Dendritic cell treated with granulocyte-macrophage colony-stimulating factor and Interleukin-4, amounts not matched to agents 40 ng/mL and 50 ng/mL, for 4 days (primary cell): ENCODE measurements at regions of chr4 and their contacts with region 1.

Region 1: DNA sequence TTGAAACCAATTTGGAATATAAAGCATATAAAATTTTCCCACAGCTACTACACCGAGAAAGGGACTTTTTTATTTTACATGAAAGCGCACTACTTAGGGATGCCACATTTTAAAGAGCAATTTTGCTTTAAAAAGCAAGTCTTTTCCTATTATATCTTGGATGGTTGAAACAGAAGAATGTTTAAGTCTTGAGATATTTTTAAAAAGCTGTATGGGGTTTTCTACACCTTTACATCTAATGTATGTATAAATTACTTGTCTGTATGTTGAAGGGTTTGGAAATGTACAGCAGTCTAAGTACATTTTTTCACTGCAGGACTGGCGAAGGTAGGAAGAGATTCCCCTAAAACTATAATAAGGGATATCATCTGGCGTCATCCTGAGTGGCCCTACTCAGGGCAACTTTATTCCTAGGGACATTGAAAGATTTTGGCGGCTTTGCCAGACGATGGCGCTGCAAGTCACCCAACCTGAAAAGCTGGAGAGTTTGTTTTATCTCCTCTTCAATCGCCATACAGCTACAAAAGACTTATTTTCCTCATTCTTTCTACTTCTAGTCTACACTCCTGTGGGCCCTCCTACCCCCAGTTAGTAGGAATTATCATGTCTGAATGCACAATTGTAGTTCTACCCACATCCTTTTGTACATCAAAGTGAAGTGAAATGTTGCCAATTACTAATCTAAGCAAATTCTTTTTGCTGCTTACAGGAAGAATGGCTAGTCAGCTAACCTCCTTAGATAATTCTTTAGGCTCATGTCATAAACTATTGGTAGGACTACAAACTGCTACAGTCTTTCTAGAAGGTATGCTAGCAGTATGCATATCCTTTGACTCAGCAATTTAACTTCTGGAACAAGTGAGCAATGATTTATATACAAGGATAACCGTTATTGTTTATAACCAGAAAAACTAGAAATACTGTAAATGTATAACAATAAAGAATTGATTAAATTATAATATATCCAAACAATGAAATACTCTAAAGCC is 782 bp upstream of the NEK1 start:
- H3K4me3 Mint-ChIP-seq: peak overlapping the region; percentile 90
- H3K27ac Mint-ChIP-seq: peak overlapping the region; percentile 97
- H3K4me1 Mint-ChIP-seq: peaks cover 11% of the 10 kb centered on the region
- H3K27me3 Mint-ChIP-seq: no peaks in the 10 kb centered on the region

Region 2: DNA sequence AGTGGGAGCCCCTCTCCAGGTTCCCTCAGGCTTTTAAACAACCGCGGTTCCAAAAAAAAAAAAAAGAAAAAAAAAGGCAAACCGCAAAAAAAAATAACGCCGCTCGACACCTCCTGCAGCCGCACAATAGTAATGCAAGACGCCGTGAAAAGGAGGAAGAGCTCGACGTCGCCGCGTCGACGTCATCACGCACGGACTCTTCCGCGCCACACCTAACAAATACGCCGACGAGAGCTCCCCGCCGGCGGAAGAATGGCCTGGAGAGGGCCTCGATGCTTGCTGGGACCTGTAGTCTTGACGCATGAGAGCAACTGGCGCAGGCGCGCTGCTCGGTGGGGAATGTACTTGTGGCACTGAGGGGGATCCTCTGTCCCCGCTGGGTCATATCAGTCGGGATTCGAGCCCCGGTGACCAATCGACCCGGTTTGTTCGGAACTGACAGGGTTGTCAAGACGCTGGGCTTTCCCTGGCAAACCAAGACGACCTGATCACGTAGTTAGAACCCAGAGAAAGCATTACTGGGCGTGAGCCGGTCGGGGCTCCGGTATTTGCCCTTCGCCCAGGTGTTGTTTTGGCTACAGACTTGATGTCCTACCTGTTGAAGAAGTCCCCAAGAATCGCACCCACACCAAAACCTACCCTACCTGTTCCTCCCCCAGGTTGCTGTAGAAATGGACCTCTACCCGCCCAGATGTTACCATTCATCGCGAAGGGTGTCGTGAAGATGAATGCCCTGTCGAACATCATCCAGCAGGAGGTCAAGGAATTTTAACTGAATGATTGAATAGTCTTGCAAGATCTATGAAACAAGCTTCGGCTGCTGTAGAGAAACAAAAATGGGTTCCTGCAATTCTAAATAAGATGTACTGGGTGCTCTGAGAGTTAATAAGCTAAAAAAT is 602.8 kb before region 1 on chr4 and contains the start of gene CBR4:
- intact Hi-C with region 1: loop called (anchors 5 kb)
- H3K4me3 Mint-ChIP-seq: peak within 1 kb of the TSS; percentile 90
- H3K27ac Mint-ChIP-seq: peak within 1 kb of the TSS; percentile 96
- H3K4me1 Mint-ChIP-seq: peaks cover 19% of the 10 kb centered on the region
- H3K27me3 Mint-ChIP-seq: no peaks in the 10 kb centered on the region

Region 3: DNA sequence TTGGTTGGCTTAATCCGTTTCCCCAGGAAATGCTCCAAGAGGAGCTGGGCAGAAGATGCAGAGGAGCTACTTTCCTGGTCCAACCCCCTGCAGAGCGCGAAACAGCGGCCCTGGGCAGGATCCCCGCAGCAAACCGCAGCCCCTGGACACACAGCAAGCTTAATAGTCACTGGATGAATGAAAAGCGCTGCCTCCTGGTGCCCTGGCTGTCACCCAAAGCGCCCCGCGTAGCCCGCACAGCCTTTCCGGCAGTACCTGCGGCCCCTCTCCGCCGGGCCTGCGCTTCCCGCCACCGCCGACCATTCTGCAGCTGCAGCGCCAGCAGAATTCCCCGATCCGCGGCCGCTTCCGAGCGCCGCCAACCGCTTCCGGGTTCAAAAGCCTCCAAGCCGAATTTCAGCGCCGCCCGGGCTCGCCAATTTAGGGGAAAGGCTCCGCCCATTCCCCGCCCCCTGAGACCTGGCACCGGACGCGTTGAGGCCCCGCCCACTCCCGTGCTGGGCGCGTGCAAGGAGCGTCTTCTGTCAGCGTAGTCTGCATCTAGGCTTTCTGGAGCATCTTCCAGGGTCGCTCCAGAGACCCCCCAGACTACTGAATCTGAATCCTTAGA is 144.5 kb after region 1 on chr4 and contains the start of gene HPF1:
- intact Hi-C with region 1: loop called (anchors 2 kb)
- H3K4me3 Mint-ChIP-seq: peak within 1 kb of the TSS; percentile 90
- H3K27ac Mint-ChIP-seq: peak within 1 kb of the TSS; percentile 79
- H3K4me1 Mint-ChIP-seq: peaks cover 30% of the 10 kb centered on the region
- H3K27me3 Mint-ChIP-seq: peaks cover 8% of the 10 kb centered on the region

Region 4: DNA sequence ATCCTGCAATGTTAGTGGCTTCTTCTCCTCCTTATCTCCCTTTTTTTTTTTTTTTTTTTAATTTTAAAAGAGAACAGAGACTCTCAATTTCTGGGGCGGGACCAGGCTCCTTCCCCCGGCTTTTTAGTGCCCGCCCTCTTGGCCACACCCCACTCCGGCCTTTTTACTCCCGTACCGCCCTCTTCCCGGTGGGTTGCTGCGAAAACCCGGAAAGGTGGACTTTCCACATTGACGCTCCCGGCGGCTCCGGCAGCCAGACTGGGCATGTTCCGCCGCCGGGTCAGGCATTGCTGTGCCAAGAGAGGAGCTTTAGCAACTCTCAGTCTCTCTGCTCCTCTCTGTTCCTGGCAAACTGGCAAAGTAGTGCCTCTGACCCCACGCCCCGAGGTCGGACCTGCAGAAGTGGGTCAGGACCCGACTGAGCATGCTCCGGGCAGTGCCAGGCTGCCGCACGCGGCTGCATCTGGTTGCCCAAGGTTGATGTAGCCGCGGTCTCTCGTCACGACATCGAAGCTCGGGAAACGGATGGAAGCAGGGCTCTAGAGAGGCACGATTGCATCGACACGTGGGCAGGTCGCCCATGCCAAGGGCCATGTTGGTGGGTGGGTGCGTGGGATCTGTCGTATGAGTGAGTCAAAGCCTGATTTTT is 414.1 kb after region 1 on chr4:
- intact Hi-C with region 1: loop called (anchors 2 kb)
- H3K4me3 Mint-ChIP-seq: peak overlapping the region; percentile 80
- H3K27ac Mint-ChIP-seq: peak overlapping the region; percentile 81
- H3K4me1 Mint-ChIP-seq: peaks cover 16% of the 10 kb centered on the region
- H3K27me3 Mint-ChIP-seq: peaks cover 80% of the 10 kb centered on the region

Region 5: DNA sequence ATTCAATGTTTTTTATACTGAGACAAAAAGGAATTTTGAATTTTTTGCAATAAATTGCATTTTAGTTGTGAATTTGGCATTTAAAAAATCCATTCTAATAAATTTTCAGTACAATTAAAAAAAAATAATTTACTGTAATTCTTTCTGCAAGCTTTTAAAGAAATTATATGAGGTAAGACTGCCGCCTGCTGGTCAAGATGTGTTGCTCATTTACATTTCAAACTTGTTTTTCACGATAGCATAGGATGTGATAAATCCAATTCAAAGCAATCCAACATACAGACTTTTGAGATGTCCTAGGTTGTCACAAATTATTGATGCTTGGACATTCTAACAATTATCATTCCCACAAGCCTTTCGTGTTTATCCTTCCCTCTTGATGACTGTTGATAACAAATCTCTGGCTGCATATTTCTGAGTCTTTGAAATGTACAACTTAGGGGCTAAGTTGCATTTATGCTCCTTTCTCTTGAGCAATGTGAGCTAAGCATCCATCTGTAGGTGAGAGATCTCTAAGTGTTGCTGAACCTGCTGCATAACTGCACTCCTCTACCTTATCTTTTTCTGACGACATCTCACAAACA is 434.7 kb after region 1 on chr4:
- intact Hi-C with region 1: loop called (anchors 5 kb)
- H3K4me3 Mint-ChIP-seq: no peak overlapping the region
- H3K27ac Mint-ChIP-seq: no peak overlapping the region
- H3K4me1 Mint-ChIP-seq: no peaks in the 10 kb centered on the region
- H3K27me3 Mint-ChIP-seq: peaks cover 12% of the 10 kb centered on the region